Psoas muscle (tissue), 8 donors: ENCODE measurements at regions of chr1 and their contacts with region 1.

Region 1: GRCh38 chr1:228139944-228140656 is at the start of gene GUK1:
- DNase-seq: peak; percentile 100
- ATAC-seq: peak; percentile 89 to 94 (median 92)
- H3K4me3 ChIP-seq: peak within 1 kb of the TSS; percentile 89
- H3K27ac ChIP-seq: peak within 1 kb of the TSS; percentile 97
- H3K4me1 ChIP-seq: peaks cover 30% of the 10 kb centered on the region
- H3K27me3 ChIP-seq: no peaks in the 10 kb centered on the region
- CTCF ChIP-seq: no peak
- total RNA-seq, gene GUK1: 90.2 to 122 (median 92.8) TPM

Region 2: GRCh38 chr1:228165372-228166169 is 25.5 kb after region 1 on chr1 and contains the start of gene IBA57:
- intact Hi-C with region 1: loop called in 1 of 2 experiments (anchors 1 kb)
- DNase-seq: peak; percentile 100
- ATAC-seq: peak; percentile 84 to 88 (median 86)
- H3K4me3 ChIP-seq: peak within 1 kb of the TSS; percentile 75
- H3K27ac ChIP-seq: peak within 1 kb of the TSS; percentile 99
- H3K4me1 ChIP-seq: peaks cover 35% of the 10 kb centered on the region
- H3K27me3 ChIP-seq: no peaks in the 10 kb centered on the region
- CTCF ChIP-seq: peak; percentile 85
- total RNA-seq, gene IBA57: 11.3 to 26.2 (median 17.8) TPM

Region 3: DNA sequence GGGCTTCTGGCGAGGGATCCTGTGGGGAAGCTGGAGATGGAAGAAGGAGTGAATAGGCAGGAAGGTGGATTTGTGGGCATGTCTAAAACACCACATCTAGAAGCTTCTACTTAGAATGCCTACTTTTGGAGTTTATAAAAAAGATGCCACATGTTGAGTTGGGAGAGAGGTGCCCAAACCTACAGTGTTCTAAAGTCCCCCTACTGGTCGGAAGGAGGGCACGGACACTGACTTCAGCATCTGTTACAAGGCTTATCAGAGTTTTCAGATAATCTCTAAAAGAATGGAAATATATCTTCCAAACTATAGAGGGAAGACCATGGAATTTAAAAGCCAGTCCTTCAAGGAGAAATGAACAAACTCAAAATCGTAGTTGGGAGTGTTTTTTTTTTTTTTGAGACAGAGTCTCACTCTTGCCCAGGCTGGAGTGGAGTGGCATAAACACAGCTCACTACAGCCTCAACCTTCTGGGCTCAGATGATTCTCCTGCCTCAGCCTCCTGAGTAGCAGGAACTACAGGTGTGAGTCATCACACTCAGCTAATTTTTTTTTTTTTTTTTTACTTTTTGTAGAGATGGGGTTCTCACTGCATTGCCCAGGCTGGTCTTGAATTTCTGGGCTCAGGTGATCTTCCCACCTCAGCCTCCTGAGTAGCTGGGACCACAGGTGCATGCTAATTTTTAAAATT is 40.3 kb after region 1 on chr1:
- intact Hi-C with region 1: no loop called
- DNase-seq: no peak
- ATAC-seq: peak in 1 of 4 donors; percentile 31
- H3K4me3 ChIP-seq: no peak overlapping the region
- H3K27ac ChIP-seq: peak overlapping the region; percentile 73
- H3K4me1 ChIP-seq: no peaks in the 10 kb centered on the region
- H3K27me3 ChIP-seq: no peaks in the 10 kb centered on the region
- CTCF ChIP-seq: no peak

Region 4: DNA sequence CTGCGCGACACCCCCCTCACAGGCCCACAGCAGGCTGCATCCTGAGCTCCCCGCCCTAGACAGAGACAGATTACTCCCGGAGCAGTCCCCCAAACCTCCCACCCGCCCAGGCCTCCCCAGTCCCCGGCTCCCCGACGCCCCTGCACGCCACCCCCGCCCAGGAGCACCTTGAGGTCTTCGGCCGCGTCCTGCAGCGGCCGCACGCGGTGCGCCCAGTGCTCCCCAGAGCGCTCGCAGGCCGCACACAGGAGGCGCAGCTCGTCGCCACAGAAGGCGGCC is 265.8 kb after region 1 on chr1:
- intact Hi-C with region 1: loop called in 1 of 2 experiments (anchors 10 kb)
- DNase-seq: no peak
- ATAC-seq: peak; percentile 31 to 44 (median 40)
- H3K4me3 ChIP-seq: peak overlapping the region; percentile 79
- H3K27ac ChIP-seq: peak overlapping the region; percentile 56
- H3K4me1 ChIP-seq: peaks cover 14% of the 10 kb centered on the region
- H3K27me3 ChIP-seq: no peaks in the 10 kb centered on the region
- CTCF ChIP-seq: no peak

Region 5: DNA sequence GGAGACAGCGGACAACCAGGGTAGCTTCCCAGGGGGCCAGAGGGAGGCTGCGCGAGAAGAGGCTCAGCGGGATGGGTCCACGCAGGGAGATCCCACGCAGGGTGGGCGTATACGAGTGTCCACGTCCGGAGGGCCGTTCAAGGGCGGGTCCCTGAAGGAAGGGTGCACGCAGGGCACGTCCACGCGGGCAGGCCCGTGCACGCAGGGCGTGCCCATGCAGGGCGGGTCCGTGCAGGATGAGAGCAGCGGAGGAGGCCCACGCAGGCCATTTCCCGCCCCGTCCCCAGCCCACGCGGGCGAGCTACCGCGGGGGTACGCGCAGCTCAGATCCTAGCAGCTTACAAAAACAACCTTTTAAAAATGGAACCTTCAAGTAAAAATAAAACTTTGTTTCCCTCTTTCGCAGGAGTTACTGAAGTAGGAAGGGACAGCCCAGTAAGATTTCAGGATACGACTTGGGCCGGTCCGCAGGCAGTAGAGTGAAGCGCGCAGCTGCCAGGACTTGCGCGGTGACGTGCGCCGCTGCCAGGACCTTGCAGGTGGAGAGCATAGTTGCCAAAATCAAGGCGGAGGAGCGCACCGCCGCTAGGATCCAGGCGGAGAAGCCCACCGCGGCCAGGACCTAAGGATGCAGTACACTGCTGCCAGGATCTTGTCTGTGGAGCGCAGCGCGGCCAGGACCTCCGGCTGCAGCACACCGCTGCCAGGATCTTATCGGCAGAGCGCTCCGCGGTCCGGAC is 346.7 kb after region 1 on chr1:
- intact Hi-C with region 1: loop called in 1 of 2 experiments (anchors 10 kb)
- DNase-seq: peak; percentile 81 to 87
- ATAC-seq: peak; percentile 73 to 84 (median 78)
- H3K4me3 ChIP-seq: peak overlapping the region; percentile 98
- H3K27ac ChIP-seq: peak overlapping the region; percentile 100
- H3K4me1 ChIP-seq: peaks cover 31% of the 10 kb centered on the region
- H3K27me3 ChIP-seq: no peaks in the 10 kb centered on the region
- CTCF ChIP-seq: no peak

Region 6: GRCh38 chr1:228964178-228965089 is 824.3 kb after region 1 on chr1:
- intact Hi-C with region 1: no loop called
- DNase-seq: peak in 1 of 2 donors; percentile 44
- ATAC-seq: peak in 2 of 4 donors; percentile 30 to 68
- H3K4me3 ChIP-seq: no peak overlapping the region
- H3K27ac ChIP-seq: peak overlapping the region; percentile 3
- H3K4me1 ChIP-seq: peaks cover 6% of the 10 kb centered on the region
- H3K27me3 ChIP-seq: no peaks in the 10 kb centered on the region
- CTCF ChIP-seq: no peak